Caco-2 (cell line): ENCODE measurements at regions of chr10 and their contacts with region 1.

Region 1: GRCh38 chr10:49205206-49205605 is 17.0 kb upstream of the TMEM273 start:
- DNase-seq: no peak
- H3K4me3 ChIP-seq: no peak overlapping the region
- H3K4me3 Mint-ChIP-seq: no peak overlapping the region
- H3K27ac Mint-ChIP-seq: no peak overlapping the region
- H3K4me1 ChIP-seq: no peaks in the 10 kb centered on the region
- H3K4me1 Mint-ChIP-seq: no peaks in the 10 kb centered on the region
- H3K27me3 ChIP-seq: no peaks in the 10 kb centered on the region
- H3K27me3 Mint-ChIP-seq: peaks cover 28% of the 10 kb centered on the region
- CTCF ChIP-seq: no peak

Region 2: DNA sequence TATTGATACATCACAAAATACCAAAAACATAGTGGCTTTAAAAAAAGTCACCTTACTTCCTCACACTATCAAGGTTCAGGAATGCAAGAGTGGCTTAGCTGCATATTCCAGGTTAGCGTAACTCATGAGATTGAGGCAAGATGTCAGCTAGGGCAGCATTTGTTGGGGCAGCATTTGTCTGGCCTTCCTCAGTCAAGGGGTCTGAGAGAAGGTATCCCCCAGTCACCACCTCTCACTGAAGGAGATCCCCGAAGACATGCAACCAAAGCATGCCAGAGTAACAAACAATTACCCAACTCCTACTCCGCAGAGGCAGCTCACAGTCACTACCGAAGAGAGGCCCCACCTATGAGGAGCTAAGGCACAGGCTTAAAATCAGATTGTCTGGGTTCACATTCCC is 142.1 kb after region 1 on chr10:
- CTCF ChIA-PET with region 1: no interaction called
- POLR2A ChIA-PET with region 1: interaction called, 10 read pairs
- intact Hi-C with region 1: no loop called
- DNase-seq: no peak
- H3K4me3 ChIP-seq: no peak overlapping the region
- H3K4me3 Mint-ChIP-seq: no peak overlapping the region
- H3K27ac Mint-ChIP-seq: no peak overlapping the region
- H3K4me1 ChIP-seq: no peaks in the 10 kb centered on the region
- H3K4me1 Mint-ChIP-seq: no peaks in the 10 kb centered on the region
- H3K27me3 ChIP-seq: no peaks in the 10 kb centered on the region; the same call in 1 of the 2 replicates
- H3K27me3 Mint-ChIP-seq: peaks cover 22% of the 10 kb centered on the region
- CTCF ChIP-seq: no peak